ENCODE measurements at regions of chr17 and their contacts with region 1.

Region 1: GRCh38 chr17:10827898-10828552 is 9.9 kb downstream of the PIRT start:
- DNase-seq: no peak
- H3K4me3 ChIP-seq: no peak overlapping the region
- H3K27ac ChIP-seq: no peak overlapping the region
- H3K4me1 ChIP-seq: peaks cover 3% of the 10 kb centered on the region
- H3K27me3 ChIP-seq: no peaks in the 10 kb centered on the region
- CTCF ChIP-seq: no peak
- EP300 ChIP-seq: no peak
- POLR2A ChIP-seq: no peak

Region 2: DNA sequence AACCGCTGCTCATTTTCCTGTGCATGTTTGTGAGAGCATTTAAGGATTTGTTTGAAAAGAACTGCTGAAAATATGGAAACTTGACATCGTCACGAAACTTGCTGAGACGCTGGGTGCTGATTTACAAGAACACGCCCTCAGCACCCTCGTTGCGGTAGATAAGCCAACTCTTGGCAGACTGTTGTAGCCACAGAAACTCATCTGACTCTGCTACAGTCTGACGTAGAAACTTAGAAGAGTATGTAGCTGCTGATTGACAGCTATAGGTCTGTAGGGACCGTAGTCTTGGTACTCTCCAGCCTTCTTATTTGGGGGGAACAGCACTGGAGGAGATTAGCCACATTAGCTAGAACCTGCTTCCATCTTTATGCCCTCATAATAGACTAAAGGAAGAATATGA is 242.5 kb before region 1 on chr17:
- intact Hi-C with region 1: no loop called
- DNase-seq: no peak
- H3K4me3 ChIP-seq: no peak overlapping the region
- H3K27ac ChIP-seq: no peak overlapping the region
- H3K4me1 ChIP-seq: no peaks in the 10 kb centered on the region
- H3K27me3 ChIP-seq: no peaks in the 10 kb centered on the region
- CTCF ChIP-seq: no peak
- EP300 ChIP-seq: no peak
- POLR2A ChIP-seq: no peak

Region 3: GRCh38 chr17:10790491-10791401 is 37.3 kb before region 1 on chr17:
- intact Hi-C with region 1: loop called in 1 of 4 experiments (anchors 5 kb)
- DNase-seq: peak in 4 of 5 donors; percentile 41 to 49 (median 47)
- H3K4me3 ChIP-seq: no peak overlapping the region
- H3K27ac ChIP-seq: peak overlapping the region in 1 of 2 donors; percentile 42
- H3K4me1 ChIP-seq: peaks cover 12% of the 10 kb centered on the region
- H3K27me3 ChIP-seq: no peaks in the 10 kb centered on the region
- CTCF ChIP-seq: no peak
- EP300 ChIP-seq: no peak
- POLR2A ChIP-seq: no peak

Region 4: DNA sequence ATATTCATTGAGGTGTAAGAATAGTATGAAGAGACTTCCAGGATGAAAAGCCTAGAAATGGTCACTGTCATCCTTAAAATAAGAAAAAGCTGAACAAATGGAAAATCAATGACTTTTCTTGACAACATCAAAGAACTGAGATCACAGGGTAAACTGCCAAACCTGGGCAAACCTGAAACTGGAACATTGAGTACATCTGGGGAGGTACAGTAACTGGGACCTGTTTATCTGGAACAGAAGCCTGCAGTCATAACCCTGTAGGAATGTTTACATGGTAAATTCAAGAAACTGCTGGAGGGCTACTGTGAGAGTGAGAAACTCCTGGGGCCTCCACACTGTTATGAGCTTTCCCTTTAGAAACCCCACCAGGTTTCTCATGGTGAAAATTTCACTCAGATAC is 140.0 kb after region 1 on chr17:
- intact Hi-C with region 1: no loop called
- DNase-seq: no peak
- H3K4me3 ChIP-seq: no peak overlapping the region
- H3K27ac ChIP-seq: no peak overlapping the region
- H3K4me1 ChIP-seq: no peaks in the 10 kb centered on the region
- H3K27me3 ChIP-seq: no peaks in the 10 kb centered on the region
- CTCF ChIP-seq: no peak
- EP300 ChIP-seq: no peak
- POLR2A ChIP-seq: no peak

Measured in ovary (tissue), 10 donors.